ENCODE measurements at regions of chrX and their contacts with region 1.

Region 1: GRCh38 chrX:80120335-80120734 is 105.8 kb downstream of the TBX22 start:
- DNase-seq: no peak
- CTCF ChIP-seq: no peak

Region 2: DNA sequence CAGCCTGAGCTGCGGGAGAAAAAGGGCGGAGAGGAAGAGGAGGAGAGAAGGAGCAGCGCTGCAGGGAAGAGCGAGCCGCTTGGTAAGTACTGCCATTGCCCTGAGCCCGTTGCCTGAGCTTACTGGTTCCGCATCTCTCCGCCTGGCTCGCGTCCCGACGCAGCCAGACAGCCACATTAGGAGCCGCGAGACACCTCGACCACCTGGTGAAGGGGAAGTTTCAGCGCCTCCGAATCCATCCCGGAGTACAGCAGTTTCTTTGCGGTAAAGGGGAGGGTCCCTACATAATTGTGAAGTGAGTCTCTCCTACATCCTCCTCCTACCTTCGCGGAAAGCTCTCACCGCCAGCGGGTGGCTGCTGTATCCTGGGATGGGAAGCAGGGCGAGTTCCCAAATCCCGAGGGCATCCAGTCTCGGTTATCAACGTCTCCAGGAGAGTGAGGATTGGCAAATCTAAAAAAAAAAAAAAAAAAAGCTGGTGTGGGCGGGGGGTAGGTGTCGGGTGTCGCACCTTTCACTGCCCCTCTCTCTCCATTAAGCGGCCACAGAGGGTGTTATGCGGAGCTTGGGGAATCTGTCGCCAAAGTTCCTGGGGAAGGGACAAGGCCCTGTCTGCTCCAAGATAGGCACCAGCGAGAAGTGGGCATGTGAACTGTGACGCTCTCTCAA is 97.8 kb before region 1 on chrX:
- in situ Hi-C with region 1: loop called (anchors 25 kb)
- DNase-seq: no peak
- CTCF ChIP-seq: no peak

Measured in GM13976 (cell line).